A673 (cell line): ENCODE measurements at regions of chr17 and their contacts with region 1.

Region 1: DNA sequence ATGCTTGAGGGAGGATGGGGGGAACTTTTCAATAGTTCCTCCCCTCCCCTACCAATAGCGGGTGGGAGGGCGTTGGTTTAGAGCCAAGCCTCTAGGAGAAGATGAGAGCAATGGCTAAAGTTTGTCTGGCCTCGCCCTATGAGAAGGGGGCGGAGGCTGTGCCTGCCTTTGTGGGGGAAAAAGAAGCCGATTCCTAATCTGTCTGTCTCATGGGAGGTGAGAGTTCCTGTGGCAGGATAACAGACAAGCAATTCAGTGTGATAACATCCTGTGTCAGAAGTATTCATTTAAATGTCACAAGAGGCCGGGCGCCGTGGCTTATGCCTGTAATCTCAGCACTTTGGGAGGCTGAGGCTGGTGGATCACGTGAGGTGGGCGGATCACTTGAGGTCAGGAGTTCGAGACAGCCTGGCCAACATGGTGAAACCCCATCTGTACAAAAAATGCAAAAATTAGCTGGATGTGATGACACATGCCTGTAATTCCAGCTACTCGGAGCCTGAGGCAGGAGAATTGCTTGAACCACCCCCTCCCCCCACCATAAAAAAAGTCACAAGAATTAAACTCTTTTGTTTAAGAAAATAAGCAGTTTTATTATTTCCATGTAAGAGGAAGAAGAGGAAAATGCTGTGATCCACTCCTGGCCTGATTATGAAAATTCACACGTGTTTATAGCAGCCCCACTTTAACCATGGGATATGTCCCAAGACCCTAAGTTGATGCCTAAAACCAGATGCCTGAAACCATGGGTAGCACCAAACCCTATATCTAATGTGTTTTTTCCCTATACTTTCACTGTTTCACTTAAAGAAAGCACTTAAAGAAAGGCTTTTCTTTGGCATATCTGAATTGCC is 1.7 kb downstream of the SLFN5 start:
- DNase-seq: peak; percentile 84
- H3K4me3 ChIP-seq: peak overlapping the region; percentile 76
- H3K27ac ChIP-seq: peak overlapping the region; percentile 74
- H3K4me1 ChIP-seq: peaks cover 15% of the 10 kb centered on the region
- H3K27me3 ChIP-seq: no peaks in the 10 kb centered on the region
- CTCF ChIP-seq: no peak

Region 2: GRCh38 chr17:35224436-35224835 is 20.1 kb before region 1 on chr17:
- CTCF ChIA-PET with region 1: no interaction called
- POLR2A ChIA-PET with region 1: no interaction called
- intact Hi-C with region 1: loop called (anchors 2 kb)
- DNase-seq: no peak
- H3K4me3 ChIP-seq: no peak overlapping the region
- H3K27ac ChIP-seq: no peak overlapping the region
- H3K4me1 ChIP-seq: no peaks in the 10 kb centered on the region
- H3K27me3 ChIP-seq: no peaks in the 10 kb centered on the region
- CTCF ChIP-seq: no peak

Region 3: DNA sequence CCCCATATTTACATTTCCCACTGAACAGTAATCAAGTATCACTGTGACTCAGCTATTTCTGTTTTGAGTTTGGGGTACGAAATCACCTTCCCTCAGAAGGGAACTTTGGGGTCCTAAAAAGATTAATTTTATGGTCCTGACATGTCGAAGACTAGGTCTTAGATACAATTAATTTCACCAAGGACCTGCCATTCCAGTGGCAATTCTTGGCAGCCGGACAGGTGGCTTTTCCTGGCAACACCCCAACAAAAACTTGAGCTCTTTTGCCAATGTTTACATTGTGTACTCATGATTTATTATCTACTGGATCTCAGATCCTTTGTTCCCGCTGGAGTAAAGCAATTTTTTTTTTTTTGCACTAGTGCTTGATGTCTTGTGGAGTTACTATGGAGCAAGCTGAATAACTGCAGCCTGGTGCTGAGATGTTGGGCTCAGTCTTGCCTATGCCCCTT is 12.7 kb after region 1 on chr17:
- CTCF ChIA-PET with region 1: no interaction called
- POLR2A ChIA-PET with region 1: no interaction called
- intact Hi-C with region 1: no loop called
- DNase-seq: no peak
- H3K4me3 ChIP-seq: no peak overlapping the region
- H3K27ac ChIP-seq: no peak overlapping the region
- H3K4me1 ChIP-seq: peaks cover 8% of the 10 kb centered on the region
- H3K27me3 ChIP-seq: no peaks in the 10 kb centered on the region
- CTCF ChIP-seq: no peak

Region 4: DNA sequence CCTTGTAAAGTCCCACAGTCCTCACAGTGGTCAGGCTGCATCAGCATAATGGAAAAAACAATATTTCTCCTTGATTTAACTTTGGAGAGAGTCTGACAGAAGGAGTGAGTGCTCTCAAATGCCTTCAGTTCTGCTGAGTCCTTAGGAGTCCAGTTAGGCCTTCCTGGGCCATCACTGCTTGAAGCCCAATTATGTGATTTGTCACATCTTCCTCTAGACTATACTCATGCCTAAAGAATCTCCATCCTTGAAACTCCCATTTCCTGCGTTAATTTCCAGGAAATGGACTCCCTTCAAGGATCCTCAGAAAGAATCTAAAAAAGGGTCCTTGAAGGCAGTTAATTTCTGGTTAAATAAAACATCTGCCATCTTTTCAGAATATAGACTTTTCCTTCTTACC is 51.1 kb after region 1 on chr17:
- CTCF ChIA-PET with region 1: no interaction called
- POLR2A ChIA-PET with region 1: interaction called, 3 read pairs
- intact Hi-C with region 1: loop called (anchors 2 kb)
- DNase-seq: peak; percentile 92
- H3K4me3 ChIP-seq: no peak overlapping the region
- H3K27ac ChIP-seq: peak overlapping the region; percentile 47
- H3K4me1 ChIP-seq: peaks cover 11% of the 10 kb centered on the region
- H3K27me3 ChIP-seq: no peaks in the 10 kb centered on the region
- CTCF ChIP-seq: no peak